Activated CD4-positive, alpha-beta memory T cell treated with anti-CD3 and anti-CD28 coated beads, Interleukin-2, amount 10 ng/mL, durations not matched to agents 7 days and 5 days (primary cell): ENCODE measurements at regions of chr7 and their contacts with region 1.

Region 1: GRCh38 chr7:140084972-140085371 is 22.2 kb upstream of the PARP12 start:
- DNase-seq: peak; percentile 73
- H3K4me3 Mint-ChIP-seq: peak overlapping the region; percentile 5
- H3K27ac Mint-ChIP-seq: peak overlapping the region; percentile 7
- H3K4me1 Mint-ChIP-seq: peaks cover 33% of the 10 kb centered on the region
- H3K27me3 Mint-ChIP-seq: peaks cover 8% of the 10 kb centered on the region

Region 2: DNA sequence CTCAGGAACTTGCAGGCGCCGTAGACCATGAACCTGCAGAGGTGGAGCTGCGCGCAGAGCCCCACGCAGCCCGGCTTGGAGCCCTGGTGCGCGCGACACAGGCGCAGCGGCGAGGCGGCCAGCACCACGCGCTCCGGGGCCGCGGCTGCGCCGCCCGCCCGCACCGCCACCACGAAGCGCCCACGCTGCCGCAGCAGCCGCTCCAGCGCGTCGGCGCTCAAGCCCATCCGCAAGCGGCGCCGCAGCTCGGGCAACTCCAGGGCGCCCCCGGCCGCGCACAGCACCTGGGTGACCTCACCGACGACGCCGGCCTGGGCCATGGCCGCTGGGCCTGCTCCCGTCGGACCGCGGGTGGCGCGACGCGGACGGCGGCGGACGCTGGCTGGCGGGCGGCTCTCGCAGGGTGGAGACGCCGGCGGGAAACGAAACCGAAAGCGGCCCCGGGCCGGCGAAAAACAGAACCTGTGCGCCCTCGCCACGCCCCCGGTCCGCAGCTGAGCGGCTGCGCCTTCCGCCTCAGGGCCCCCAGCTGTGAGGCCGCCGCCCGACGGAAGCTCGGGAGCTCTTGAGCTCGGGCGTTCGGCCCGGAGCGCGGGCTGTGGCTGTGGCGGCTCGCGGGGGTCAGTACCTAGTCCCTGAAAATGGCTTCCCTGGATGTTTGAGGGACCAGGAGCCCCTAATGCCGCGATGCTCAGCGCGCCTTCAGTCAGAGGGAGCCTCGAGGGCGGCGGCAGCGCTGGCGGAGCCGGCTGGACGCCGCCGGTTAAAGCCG is 22.3 kb before region 1 on chr7 and contains the start of gene PARP12:
- CTCF ChIA-PET with region 1: no interaction called
- POLR2A ChIA-PET with region 1: interaction called, 34 read pairs
- DNase-seq: peak; percentile 93
- H3K4me3 Mint-ChIP-seq: peak within 1 kb of the TSS; percentile 80
- H3K27ac Mint-ChIP-seq: peak within 1 kb of the TSS; percentile 82
- H3K4me1 Mint-ChIP-seq: peaks cover 48% of the 10 kb centered on the region
- H3K27me3 Mint-ChIP-seq: peaks cover 5% of the 10 kb centered on the region
- total RNA-seq, gene PARP12: 146 to 151 TPM

Region 3: GRCh38 chr7:140200061-140200989 is 115.4 kb after region 1 on chr7:
- CTCF ChIA-PET with region 1: no interaction called
- POLR2A ChIA-PET with region 1: no interaction called
- DNase-seq: no peak
- H3K4me3 Mint-ChIP-seq: no peak overlapping the region
- H3K27ac Mint-ChIP-seq: no peak overlapping the region
- H3K4me1 Mint-ChIP-seq: peaks cover 19% of the 10 kb centered on the region
- H3K27me3 Mint-ChIP-seq: no peaks in the 10 kb centered on the region